CD8-positive, alpha-beta T cell (primary cell): ENCODE measurements at regions of chr16 and their contacts with region 1.

Region 1: DNA sequence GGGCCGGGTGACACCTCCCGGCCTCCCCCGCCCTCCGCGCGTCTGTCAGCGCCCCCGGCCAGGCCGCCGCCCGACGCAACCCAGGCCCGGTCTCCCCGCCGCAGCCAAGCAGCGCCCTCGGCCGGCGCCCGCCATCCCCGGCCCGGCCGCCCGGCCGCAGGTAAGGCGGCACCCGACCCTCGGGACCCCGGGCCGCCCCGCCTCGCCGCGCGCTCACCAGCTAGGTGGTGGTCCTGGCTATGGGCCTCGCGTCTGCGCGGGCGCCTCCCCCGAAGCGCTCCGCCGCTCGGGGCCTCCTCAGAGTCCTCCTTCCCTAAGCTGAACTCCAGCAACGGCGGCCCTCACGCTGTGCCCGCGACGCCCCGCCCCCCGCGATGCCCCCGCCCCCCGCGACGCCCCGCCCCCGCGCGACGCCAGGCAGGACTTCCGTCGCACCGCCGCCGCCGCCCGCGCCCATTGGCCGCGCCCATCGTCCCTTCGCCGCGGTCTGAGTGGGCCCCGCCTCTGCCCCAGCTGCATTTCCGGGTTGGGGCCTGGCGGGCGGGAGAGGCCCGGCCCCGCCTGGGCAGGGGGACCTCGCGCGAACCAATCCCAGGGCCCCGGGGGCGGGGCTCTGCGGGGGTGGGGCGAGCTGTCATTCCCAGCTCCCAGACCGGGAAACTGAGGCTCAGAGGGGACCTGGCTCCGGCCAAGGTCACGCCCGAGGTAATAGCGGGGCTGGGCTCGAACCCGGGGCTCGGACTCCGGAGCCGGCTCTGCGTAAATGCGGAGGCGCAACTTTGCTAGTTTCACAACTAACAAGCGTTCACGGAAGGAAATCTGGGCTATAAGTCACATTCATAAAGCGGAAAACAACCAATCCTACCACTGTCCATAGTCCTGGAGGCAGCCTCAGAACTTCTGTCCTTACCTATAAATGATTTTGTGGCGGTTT is 9.0 kb upstream of the KCTD5 start:
- DNase-seq: peak; percentile 91 to 98 (median 95)
- ATAC-seq: peak; percentile 92
- H3K4me3 ChIP-seq: peak overlapping the region; percentile 80 to 94
- H3K4me3 Mint-ChIP-seq: peak overlapping the region; percentile 84
- H3K27ac ChIP-seq: peak overlapping the region; percentile 76 to 78
- H3K27ac Mint-ChIP-seq: peak overlapping the region; percentile 80
- H3K4me1 ChIP-seq: peaks cover 14% of the 10 kb centered on the region
- H3K4me1 Mint-ChIP-seq: peaks cover 35% of the 10 kb centered on the region
- H3K27me3 ChIP-seq: no peaks in the 10 kb centered on the region
- H3K27me3 Mint-ChIP-seq: no peaks in the 10 kb centered on the region
- CTCF ChIP-seq: no peak

Region 2: GRCh38 chr16:2251483-2252240 is 421.7 kb before region 1 on chr16 and contains the start of gene ECI1:
- CTCF ChIA-PET with region 1: no interaction called
- POLR2A ChIA-PET with region 1: no interaction called
- intact Hi-C with region 1: no loop called
- DNase-seq: peak; percentile 50 to 89 (median 80)
- ATAC-seq: peak; percentile 70
- H3K4me3 ChIP-seq: peak within 1 kb of the TSS; percentile 57 to 64
- H3K4me3 Mint-ChIP-seq: peak within 1 kb of the TSS; percentile 85
- H3K27ac ChIP-seq: peak within 1 kb of the TSS; percentile 64 to 81
- H3K27ac Mint-ChIP-seq: peak within 1 kb of the TSS; percentile 90
- H3K4me1 ChIP-seq: peaks cover 8% of the 10 kb centered on the region
- H3K4me1 Mint-ChIP-seq: peaks cover 10% of the 10 kb centered on the region
- H3K27me3 ChIP-seq: no peaks in the 10 kb centered on the region
- H3K27me3 Mint-ChIP-seq: no peaks in the 10 kb centered on the region
- CTCF ChIP-seq: no peak
- total RNA-seq, gene ECI1: 10.6 to 11.0 TPM

Region 3: DNA sequence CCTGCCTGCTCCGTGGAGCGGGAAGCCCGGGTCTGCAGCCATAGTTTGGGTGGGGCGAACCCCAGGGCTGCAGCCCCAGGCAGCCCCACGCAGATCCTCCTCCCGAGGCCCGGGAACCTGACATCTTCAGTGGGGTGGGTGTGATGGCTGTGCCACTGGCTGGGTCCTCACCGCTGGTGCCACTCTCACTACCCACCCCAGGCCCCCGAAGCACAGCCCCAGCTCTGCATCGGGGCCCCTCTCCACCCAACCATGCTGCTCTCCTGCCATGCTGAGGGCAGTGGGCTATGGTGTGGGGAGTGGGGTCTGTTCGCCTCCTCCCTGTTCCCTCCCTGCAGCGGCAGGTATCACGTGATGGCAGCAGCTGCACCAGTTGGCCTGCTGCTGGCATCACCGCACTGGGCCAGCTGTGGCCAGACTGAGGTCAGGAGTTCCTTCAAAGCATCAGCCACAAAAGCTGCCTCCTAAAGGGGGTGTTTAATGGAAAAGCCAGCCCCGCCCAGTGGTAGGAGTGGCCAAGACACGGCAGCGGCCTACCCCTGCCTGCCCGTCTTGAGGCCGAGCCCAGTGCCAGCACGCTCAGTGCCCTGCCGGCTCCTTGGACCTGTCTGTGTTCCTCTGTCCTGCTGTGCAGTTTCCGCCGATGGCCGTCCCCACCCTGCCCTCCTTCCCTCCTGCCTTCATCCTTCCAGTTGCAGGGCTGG is 19.8 kb after region 1 on chr16:
- CTCF ChIA-PET with region 1: no interaction called
- POLR2A ChIA-PET with region 1: no interaction called
- intact Hi-C with region 1: no loop called
- DNase-seq: no peak
- ATAC-seq: no peak
- H3K4me3 ChIP-seq: no peak overlapping the region
- H3K4me3 Mint-ChIP-seq: no peak overlapping the region
- H3K27ac ChIP-seq: no peak overlapping the region
- H3K27ac Mint-ChIP-seq: no peak overlapping the region
- H3K4me1 ChIP-seq: no peaks in the 10 kb centered on the region
- H3K4me1 Mint-ChIP-seq: peaks cover 1% of the 10 kb centered on the region
- H3K27me3 ChIP-seq: no peaks in the 10 kb centered on the region
- H3K27me3 Mint-ChIP-seq: no peaks in the 10 kb centered on the region
- CTCF ChIP-seq: no peak

Region 4: DNA sequence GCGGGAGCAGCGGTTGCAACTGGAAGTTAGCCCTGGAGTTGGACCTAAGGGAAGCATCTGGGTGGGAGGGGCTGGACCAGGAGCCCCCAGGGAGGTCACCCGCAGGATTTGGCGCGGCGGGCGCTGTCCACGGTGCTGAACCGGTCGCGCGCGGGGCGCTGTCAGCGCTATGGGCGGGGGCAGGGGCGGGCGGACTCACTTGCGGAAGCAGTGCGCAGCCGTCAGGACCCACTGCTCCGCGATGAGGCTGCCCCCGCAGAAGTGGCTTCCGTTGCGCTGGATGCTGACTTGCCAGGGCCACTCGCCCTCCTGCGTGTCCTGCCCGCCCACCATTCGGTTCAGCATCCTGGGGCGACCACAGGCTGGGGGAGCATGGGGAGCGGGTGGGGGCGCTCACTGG is 42.2 kb after region 1 on chr16:
- CTCF ChIA-PET with region 1: no interaction called
- POLR2A ChIA-PET with region 1: no interaction called
- intact Hi-C with region 1: loop called in 1 of 2 experiments (anchors 1 kb)
- DNase-seq: peak; percentile 70 to 90 (median 87)
- ATAC-seq: peak; percentile 99
- H3K4me3 ChIP-seq: peak overlapping the region; percentile 8 to 33
- H3K4me3 Mint-ChIP-seq: peak overlapping the region; percentile 5
- H3K27ac ChIP-seq: no peak overlapping the region
- H3K27ac Mint-ChIP-seq: no peak overlapping the region
- H3K4me1 ChIP-seq: peaks cover 5% of the 10 kb centered on the region
- H3K4me1 Mint-ChIP-seq: peaks cover 3% of the 10 kb centered on the region
- H3K27me3 ChIP-seq: no peaks in the 10 kb centered on the region
- H3K27me3 Mint-ChIP-seq: no peaks in the 10 kb centered on the region
- CTCF ChIP-seq: no peak

Region 5: DNA sequence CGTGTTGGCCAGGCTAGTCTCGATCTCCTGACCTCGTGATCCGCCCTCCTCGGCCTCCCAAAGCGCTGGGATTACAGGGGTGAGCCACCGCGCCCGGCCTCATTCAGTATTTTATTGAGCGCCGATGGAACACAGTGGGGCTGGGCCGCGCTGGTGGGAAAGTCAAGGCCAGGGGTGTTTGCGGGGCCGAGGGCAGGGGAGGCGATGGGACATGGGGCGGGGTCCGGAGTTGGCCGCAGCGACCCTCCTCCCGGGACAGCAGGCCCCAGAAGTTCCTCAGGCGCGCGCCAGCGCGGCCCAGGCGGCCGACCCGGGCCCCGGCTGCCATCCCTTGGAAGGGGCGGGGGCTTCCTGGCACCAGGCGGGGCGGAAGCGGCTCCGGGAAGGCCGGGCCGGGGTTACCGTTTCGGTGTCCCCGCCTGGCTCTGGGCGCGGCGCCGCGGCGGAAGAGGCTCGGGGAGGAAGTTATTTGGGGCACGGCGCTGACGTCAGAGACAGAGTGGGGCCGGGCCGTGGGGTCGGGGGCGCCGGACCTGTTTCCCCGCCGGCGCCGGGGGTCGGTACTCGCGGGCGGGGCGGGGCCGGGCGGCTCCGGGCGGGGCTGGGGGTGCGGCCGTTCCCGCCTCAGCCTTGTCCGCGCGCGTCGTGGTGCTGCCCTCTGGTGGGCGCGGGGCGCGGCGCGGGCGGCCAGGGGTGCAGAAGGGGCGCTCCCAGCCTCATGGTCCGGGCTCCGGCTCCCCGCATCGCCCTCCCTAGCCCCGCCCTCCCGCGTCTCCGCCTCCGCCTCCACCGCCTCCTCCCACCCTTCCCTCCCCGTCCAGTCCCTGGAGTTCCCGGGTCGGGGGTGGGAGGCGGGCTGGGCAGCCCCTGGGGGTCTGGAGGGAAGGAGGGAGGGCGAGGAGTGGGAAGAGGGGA is 47.6 kb after region 1 on chr16:
- CTCF ChIA-PET with region 1: no interaction called
- POLR2A ChIA-PET with region 1: no interaction called
- intact Hi-C with region 1: loop called (anchors 1 to 2 kb)
- DNase-seq: peak; percentile 69 to 93 (median 82)
- ATAC-seq: peak; percentile 90
- H3K4me3 ChIP-seq: peak overlapping the region; percentile 52 to 62
- H3K4me3 Mint-ChIP-seq: peak overlapping the region; percentile 78
- H3K27ac ChIP-seq: peak overlapping the region; percentile 40 to 57
- H3K27ac Mint-ChIP-seq: peak overlapping the region; percentile 79
- H3K4me1 ChIP-seq: peaks cover 1% of the 10 kb centered on the region
- H3K4me1 Mint-ChIP-seq: no peaks in the 10 kb centered on the region
- H3K27me3 ChIP-seq: no peaks in the 10 kb centered on the region
- H3K27me3 Mint-ChIP-seq: peaks cover 12% of the 10 kb centered on the region
- CTCF ChIP-seq: peak; percentile 77

Region 6: GRCh38 chr16:2777231-2777902 is 104.0 kb after region 1 on chr16 and contains the start of gene ELOB:
- CTCF ChIA-PET with region 1: no interaction called
- POLR2A ChIA-PET with region 1: interaction called, 6 read pairs
- intact Hi-C with region 1: loop called in 1 of 2 experiments (anchors 1 kb)
- DNase-seq: peak; percentile 78 to 94 (median 88)
- ATAC-seq: peak; percentile 90
- H3K4me3 ChIP-seq: peak within 1 kb of the TSS; percentile 84 to 92
- H3K4me3 Mint-ChIP-seq: peak within 1 kb of the TSS; percentile 95
- H3K27ac ChIP-seq: peak within 1 kb of the TSS; percentile 96 to 99
- H3K27ac Mint-ChIP-seq: peak within 1 kb of the TSS; percentile 98
- H3K4me1 ChIP-seq: peaks cover 30% of the 10 kb centered on the region
- H3K4me1 Mint-ChIP-seq: peaks cover 50% of the 10 kb centered on the region
- H3K27me3 ChIP-seq: no peaks in the 10 kb centered on the region
- H3K27me3 Mint-ChIP-seq: no peaks in the 10 kb centered on the region
- CTCF ChIP-seq: no peak
- total RNA-seq, gene ELOB: 70.3 to 71.5 TPM

Region 7: DNA sequence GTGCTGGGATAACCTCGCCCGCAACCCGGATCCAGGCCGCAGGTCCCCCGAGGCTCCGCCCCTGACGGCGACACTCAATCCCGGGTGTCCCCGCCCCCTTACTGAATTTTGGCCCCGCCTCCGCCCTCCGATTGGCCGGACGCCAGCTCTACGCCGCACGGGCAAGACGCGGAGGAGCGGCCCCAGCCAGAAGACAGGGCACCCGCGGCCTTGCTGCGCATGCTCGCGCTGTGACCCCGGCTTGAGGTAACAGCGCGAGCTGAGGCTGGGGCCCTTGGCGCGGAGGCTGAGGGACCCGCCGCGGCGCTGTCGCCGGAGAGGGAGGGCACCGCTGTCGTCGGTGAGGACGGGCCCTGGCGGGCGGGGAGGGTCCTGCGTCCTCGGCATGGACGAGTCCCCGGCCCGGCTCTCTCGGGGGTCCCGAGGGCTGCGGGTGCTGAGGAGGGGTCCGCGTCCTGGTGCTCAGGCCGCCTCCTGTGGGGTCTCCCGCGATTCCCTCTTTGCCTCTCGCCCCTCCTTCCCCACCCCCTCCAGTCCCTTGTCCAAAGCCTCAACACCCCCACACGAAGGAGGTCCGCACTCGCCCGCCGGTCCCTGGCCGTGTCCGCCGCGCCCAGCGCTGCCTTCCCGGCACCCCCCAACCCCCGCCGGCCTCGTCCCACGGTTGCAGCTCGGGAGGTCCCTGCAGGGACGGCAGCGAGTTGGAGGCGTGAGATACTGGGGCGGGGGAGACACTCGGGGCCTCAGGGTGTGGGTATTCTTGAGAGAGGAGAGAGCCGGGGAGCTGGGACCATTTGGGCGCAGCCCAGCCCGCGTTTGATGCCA is 209.9 kb after region 1 on chr16 and contains the start of gene FLYWCH2:
- CTCF ChIA-PET with region 1: no interaction called
- POLR2A ChIA-PET with region 1: interaction called, 3 read pairs
- intact Hi-C with region 1: loop called in 1 of 2 experiments (anchors 2 kb)
- DNase-seq: peak; percentile 98 to 100 (median 99)
- ATAC-seq: peak; percentile 83
- H3K4me3 ChIP-seq: peak within 1 kb of the TSS; percentile 69 to 78
- H3K4me3 Mint-ChIP-seq: peak within 1 kb of the TSS; percentile 87
- H3K27ac ChIP-seq: peak within 1 kb of the TSS; percentile 90 to 94
- H3K27ac Mint-ChIP-seq: peak within 1 kb of the TSS; percentile 95
- H3K4me1 ChIP-seq: peaks cover 9% of the 10 kb centered on the region
- H3K4me1 Mint-ChIP-seq: peaks cover 17% of the 10 kb centered on the region
- H3K27me3 ChIP-seq: no peaks in the 10 kb centered on the region
- H3K27me3 Mint-ChIP-seq: no peaks in the 10 kb centered on the region
- CTCF ChIP-seq: no peak
- total RNA-seq, gene FLYWCH2: 9.3 to 10.9 TPM

Region 8: DNA sequence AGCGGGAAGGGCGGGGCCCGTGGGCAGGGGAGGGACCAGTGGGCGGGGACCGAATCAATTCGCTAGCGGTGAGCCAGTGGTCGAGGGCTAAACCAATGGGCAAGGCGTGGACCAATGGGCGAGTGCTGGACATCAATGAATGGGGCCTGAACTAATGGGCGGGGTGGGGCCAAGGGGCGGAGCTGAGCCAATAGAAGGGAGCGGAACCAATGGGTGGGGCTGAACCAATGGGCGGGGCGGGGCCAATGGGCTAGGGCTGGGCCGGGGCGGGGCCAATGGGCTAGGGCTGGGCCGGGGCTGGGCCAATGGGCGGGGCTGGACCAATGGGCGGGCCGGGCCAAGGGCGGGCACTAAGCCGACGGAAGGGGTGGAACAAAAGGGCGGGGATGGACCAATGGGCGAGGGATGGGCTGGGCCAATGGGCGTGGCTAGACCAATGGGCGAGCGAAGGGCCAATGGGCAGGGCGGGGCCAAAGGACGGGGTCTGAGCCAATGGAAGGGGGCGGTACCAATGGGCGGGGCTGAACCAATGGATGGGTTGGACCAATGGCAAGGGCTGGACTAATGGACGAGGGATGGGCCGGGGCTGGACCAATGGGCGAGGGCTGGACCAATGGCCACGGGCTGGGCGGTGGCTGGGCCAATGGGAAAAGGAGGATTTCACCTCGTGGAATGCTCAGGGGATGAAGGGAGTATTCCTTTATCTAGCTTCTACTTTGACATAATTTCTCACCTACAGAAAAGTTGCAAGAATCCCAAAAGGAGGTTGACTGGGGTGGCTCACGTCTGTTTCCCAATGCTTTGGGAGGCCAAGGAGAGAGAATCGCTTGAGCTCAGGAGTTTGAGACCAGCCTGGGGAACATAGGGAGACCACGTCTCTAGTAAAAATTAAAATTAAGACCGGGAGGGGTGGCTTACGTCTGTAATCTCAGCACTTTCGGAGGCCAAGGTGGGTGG is 232.4 kb after region 1 on chr16:
- CTCF ChIA-PET with region 1: no interaction called
- POLR2A ChIA-PET with region 1: no interaction called
- intact Hi-C with region 1: loop called in 1 of 2 experiments (anchors 5 kb)
- DNase-seq: peak; percentile 73 to 96 (median 85)
- ATAC-seq: peak; percentile 83
- H3K4me3 ChIP-seq: peak overlapping the region; percentile 86 to 88
- H3K4me3 Mint-ChIP-seq: peak overlapping the region; percentile 91
- H3K27ac ChIP-seq: peak overlapping the region in 1 of 2 experiments; percentile 22
- H3K27ac Mint-ChIP-seq: peak overlapping the region; percentile 55
- H3K4me1 ChIP-seq: peaks cover 11% of the 10 kb centered on the region
- H3K4me1 Mint-ChIP-seq: peaks cover 23% of the 10 kb centered on the region
- H3K27me3 ChIP-seq: peaks cover 0 to 2% of the 10 kb centered on the region in 2 experiments
- H3K27me3 Mint-ChIP-seq: no peaks in the 10 kb centered on the region
- CTCF ChIP-seq: no peak